H1 (cell line): ENCODE measurements at regions of chr15 and their contacts with region 1.

Region 1: GRCh38 chr15:89760303-89761008 is 9.4 kb upstream of the MESP1 start:
- DNase-seq: peak; percentile 53 to 99
- H3K4me3 ChIP-seq: no peak overlapping the region
- H3K27ac ChIP-seq: no peak overlapping the region
- H3K4me1 ChIP-seq: peaks cover 0 to 2% (median 0%) of the 10 kb centered on the region in 4 experiments; a peak in 3 of 7 replicates
- H3K27me3 ChIP-seq: no peaks in the 10 kb centered on the region; a peak in 2 of 7 replicates
- CTCF ChIP-seq: peak; percentile 95 to 97 (median 97)
- EP300 ChIP-seq: no peak
- POLR2A ChIP-seq: no peak
- RAD21 ChIP-seq: peak; percentile 95

Region 2: GRCh38 chr15:89614164-89614563 is 146.3 kb before region 1 on chr15:
- CTCF ChIA-PET with region 1: no interaction called
- POLR2A ChIA-PET with region 1: no interaction called
- DNase-seq: no peak
- H3K4me3 ChIP-seq: no peak overlapping the region
- H3K27ac ChIP-seq: no peak overlapping the region
- H3K4me1 ChIP-seq: no peaks in the 10 kb centered on the region
- H3K27me3 ChIP-seq: no peaks in the 10 kb centered on the region
- CTCF ChIP-seq: no peak
- EP300 ChIP-seq: no peak
- POLR2A ChIP-seq: no peak
- RAD21 ChIP-seq: no peak

Region 3: GRCh38 chr15:89776274-89777072 is 16.0 kb after region 1 on chr15 and contains the start of gene MESP2:
- CTCF ChIA-PET with region 1: interaction called, 90 read pairs
- POLR2A ChIA-PET with region 1: interaction called, 7 read pairs
- DNase-seq: peak; percentile 75 to 90
- H3K4me3 ChIP-seq: peak within 1 kb of the TSS; percentile 3 to 56 (median 30); a peak in 7 of 8 replicates
- H3K27ac ChIP-seq: no peak within 1 kb of the TSS
- H3K4me1 ChIP-seq: peaks cover 0 to 4% (median 1%) of the 10 kb centered on the region in 4 experiments; a peak in 2 of 7 replicates
- H3K27me3 ChIP-seq: peaks cover 13 to 31% (median 27%) of the 10 kb centered on the region in 4 experiments
- CTCF ChIP-seq: peak; percentile 67 to 78 (median 71)
- EP300 ChIP-seq: no peak
- POLR2A ChIP-seq: no peak
- RAD21 ChIP-seq: peak; percentile 41 to 55; a peak in 3 of 4 replicates
- total RNA-seq, gene MESP2: 0.35 and 0.38 TPM in 2 replicates

Region 4: GRCh38 chr15:89806559-89807550 is 46.4 kb after region 1 on chr15:
- CTCF ChIA-PET with region 1: interaction called, 16 read pairs
- POLR2A ChIA-PET with region 1: no interaction called
- DNase-seq: no peak
- H3K4me3 ChIP-seq: no peak overlapping the region
- H3K27ac ChIP-seq: no peak overlapping the region
- H3K4me1 ChIP-seq: peaks cover 0 to 13% (median 1%) of the 10 kb centered on the region in 4 experiments; a peak in 4 of 7 replicates
- H3K27me3 ChIP-seq: no peaks in the 10 kb centered on the region
- CTCF ChIP-seq: no peak
- EP300 ChIP-seq: no peak
- POLR2A ChIP-seq: no peak
- RAD21 ChIP-seq: no peak

Region 5: DNA sequence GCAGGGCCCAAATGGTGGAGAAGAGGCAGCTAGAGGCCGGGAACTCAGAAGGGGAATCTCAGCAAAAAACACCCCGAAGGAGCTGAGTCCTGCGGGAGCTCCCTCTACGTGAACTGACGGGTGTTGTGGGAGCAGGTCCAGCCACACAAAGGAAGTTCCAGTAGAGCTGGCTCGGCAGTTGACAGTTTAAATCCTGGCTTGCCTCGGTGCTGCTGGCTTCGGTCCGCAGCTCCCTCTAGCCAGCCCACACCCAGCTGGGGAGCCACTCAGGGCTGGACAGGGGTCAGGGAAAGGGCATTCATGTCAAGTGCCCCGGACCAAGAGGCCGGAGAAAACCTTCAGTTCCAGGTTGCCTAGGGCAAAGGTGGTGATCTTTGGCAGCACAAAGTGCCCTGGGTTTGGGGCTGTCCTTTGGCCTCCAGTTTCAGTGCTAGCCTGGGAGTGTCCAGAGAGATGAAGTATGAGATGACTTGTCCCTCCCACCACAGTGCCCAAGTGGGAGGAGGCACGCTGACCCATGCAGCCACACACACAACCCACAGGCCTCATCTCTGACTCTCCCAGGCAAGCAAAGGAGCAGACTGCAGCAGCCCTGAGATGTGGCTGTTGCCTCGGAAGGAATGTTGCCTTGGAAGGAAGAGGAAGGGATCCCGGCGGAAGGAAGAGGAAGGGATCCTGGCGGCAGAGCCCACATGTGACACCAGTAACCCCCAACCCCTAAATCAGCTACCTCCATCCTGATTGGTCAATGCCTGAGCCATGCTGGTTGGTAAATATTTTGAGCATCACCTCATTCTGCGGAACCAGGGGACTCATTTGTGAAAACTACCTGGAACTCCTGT is 68.0 kb after region 1 on chr15:
- CTCF ChIA-PET with region 1: interaction called, 35 read pairs
- POLR2A ChIA-PET with region 1: interaction called, 3 read pairs
- DNase-seq: no peak
- H3K4me3 ChIP-seq: no peak overlapping the region
- H3K27ac ChIP-seq: no peak overlapping the region
- H3K4me1 ChIP-seq: peaks cover 0 to 9% (median 2%) of the 10 kb centered on the region in 4 experiments; a peak in 2 of 7 replicates
- H3K27me3 ChIP-seq: no peaks in the 10 kb centered on the region
- CTCF ChIP-seq: no peak
- EP300 ChIP-seq: no peak
- POLR2A ChIP-seq: no peak
- RAD21 ChIP-seq: no peak

Region 6: GRCh38 chr15:89888214-89888804 is 127.9 kb after region 1 on chr15:
- CTCF ChIA-PET with region 1: interaction called, 75 read pairs
- POLR2A ChIA-PET with region 1: no interaction called
- DNase-seq: no peak
- H3K4me3 ChIP-seq: no peak overlapping the region
- H3K27ac ChIP-seq: no peak overlapping the region
- H3K4me1 ChIP-seq: no peaks in the 10 kb centered on the region; a peak in 1 of 7 replicates
- H3K27me3 ChIP-seq: no peaks in the 10 kb centered on the region
- CTCF ChIP-seq: peak in 2 of 3 experiments; percentile 41 to 49; a peak in 3 of 4 replicates
- EP300 ChIP-seq: no peak
- POLR2A ChIP-seq: no peak
- RAD21 ChIP-seq: peak; percentile 53 to 67